ENCODE measurements at regions of chr14 and their contacts with region 1.

Region 1: DNA sequence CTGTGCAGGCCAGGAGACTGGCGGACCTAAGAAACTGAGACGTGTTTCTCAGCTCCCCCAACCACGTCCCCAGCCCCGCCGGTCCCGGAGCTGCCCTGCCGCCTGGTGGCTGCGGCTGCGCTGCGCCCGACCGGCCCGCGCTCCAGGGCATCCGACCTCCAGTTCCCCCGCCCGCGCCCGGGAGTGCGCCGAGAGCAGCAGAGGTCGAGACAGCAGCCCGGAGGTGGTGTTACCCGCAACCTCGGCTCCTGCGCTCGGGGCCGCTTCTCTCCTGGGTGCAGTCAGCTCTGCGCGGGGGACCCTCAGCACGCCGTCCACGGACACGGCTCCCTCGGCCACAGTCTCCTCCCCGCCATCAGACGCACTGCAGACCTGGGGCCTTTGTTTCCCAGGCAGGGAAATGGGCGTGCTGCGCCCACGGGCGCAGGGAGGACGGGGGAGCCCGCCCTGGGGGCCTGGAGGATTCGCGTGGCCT is 21.6 kb upstream of the GPR132 start:
- DNase-seq: peak; percentile 74 to 85 (median 77)
- ATAC-seq: peak; percentile 95
- H3K4me3 ChIP-seq: peak overlapping the region; percentile 33
- H3K27ac ChIP-seq: no peak overlapping the region
- H3K4me1 ChIP-seq: peaks cover 3 to 50% of the 10 kb centered on the region in 2 experiments; a peak in 2 of 5 replicates
- H3K27me3 ChIP-seq: no peaks in the 10 kb centered on the region; a peak in 1 of 5 replicates
- CTCF ChIP-seq: peak; percentile 74 to 91 (median 83)
- EP300 ChIP-seq: no peak
- POLR2A ChIP-seq: 0 out of 2 replicates have a peak, but pooled peaks have one; percentile 34
- RAD21 ChIP-seq: peak; percentile 74 to 82

Region 2: GRCh38 chr14:104805326-104805678 is 281.6 kb before region 1 on chr14:
- CTCF ChIA-PET with region 1: no interaction called
- POLR2A ChIA-PET with region 1: no interaction called
- in situ Hi-C with region 1: no loop called
- intact Hi-C with region 1: no loop called
- DNase-seq: peak; percentile 82 to 91 (median 88)
- ATAC-seq: peak; percentile 86
- H3K4me3 ChIP-seq: no peak overlapping the region
- H3K27ac ChIP-seq: peak overlapping the region; percentile 73
- H3K4me1 ChIP-seq: peaks cover 33 to 67% of the 10 kb centered on the region in 2 experiments
- H3K27me3 ChIP-seq: no peaks in the 10 kb centered on the region
- CTCF ChIP-seq: no peak
- EP300 ChIP-seq: no peak
- POLR2A ChIP-seq: no peak
- RAD21 ChIP-seq: no peak

Region 3: DNA sequence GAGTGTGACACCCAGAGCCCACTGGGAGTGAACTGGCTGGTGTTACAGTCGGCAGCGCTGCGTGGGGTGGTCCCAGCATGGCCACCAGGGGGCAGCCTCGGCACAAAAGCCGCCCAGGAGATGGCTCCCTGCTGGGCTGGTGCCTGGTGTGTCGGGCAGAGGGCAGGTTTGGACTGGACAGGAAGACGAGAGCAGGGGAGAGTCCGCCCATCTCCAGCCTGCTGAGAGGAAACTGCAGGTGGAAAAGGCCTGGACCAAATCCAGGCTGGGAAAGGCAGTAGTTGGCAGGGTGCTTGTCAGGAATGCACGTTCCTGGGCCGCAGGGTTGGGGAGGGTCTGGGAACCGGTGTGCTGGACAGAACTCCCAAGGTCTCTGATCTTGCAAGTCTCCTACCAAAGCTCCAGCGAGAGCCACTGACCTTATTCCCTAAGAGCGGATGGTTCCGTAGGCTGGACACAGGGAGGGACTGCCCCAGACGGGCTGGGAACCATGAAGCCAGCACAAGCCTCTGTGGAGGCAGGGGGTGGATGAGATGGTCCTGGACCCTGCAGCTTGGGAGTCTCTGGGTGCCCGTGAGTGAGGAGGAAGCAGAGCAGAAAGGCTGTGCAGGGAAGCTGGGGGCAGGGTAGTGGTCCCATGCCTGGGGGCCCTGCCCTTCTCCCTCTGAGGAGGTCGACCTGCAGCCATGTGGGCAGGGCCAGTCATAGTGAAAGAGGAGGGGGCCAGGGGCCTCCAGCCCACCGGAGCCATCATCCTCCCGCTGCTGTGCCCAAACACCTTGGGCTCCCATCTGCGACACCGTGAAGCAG is 110.5 kb before region 1 on chr14:
- CTCF ChIA-PET with region 1: interaction called, 7 read pairs
- POLR2A ChIA-PET with region 1: interaction called, 3 read pairs
- in situ Hi-C with region 1: no loop called
- intact Hi-C with region 1: loop called (anchors 2 kb)
- DNase-seq: peak; percentile 62 to 83 (median 68)
- ATAC-seq: peak; percentile 87
- H3K4me3 ChIP-seq: no peak overlapping the region
- H3K27ac ChIP-seq: no peak overlapping the region
- H3K4me1 ChIP-seq: peaks cover 7 to 80% of the 10 kb centered on the region in 2 experiments; a peak in 4 of 5 replicates
- H3K27me3 ChIP-seq: no peaks in the 10 kb centered on the region
- CTCF ChIP-seq: peak; percentile 78 to 98 (median 93)
- EP300 ChIP-seq: no peak
- POLR2A ChIP-seq: no peak
- RAD21 ChIP-seq: peak; percentile 89 to 97

Region 4: GRCh38 chr14:105045710-105046326 is 41.1 kb before region 1 on chr14:
- CTCF ChIA-PET with region 1: interaction called, 5 read pairs
- POLR2A ChIA-PET with region 1: no interaction called
- in situ Hi-C with region 1: loop called (anchors 5 kb)
- intact Hi-C with region 1: loop called (anchors 5 kb)
- DNase-seq: peak; percentile 87 to 90 (median 88)
- ATAC-seq: peak; percentile 98
- H3K4me3 ChIP-seq: no peak overlapping the region
- H3K27ac ChIP-seq: no peak overlapping the region
- H3K4me1 ChIP-seq: peaks cover 0 to 30% of the 10 kb centered on the region in 2 experiments; a peak in 2 of 5 replicates
- H3K27me3 ChIP-seq: peaks cover 0 to 8% of the 10 kb centered on the region in 2 experiments; a peak in 4 of 5 replicates
- CTCF ChIP-seq: peak; percentile 98 to 100 (median 100)
- EP300 ChIP-seq: no peak
- POLR2A ChIP-seq: no peak
- RAD21 ChIP-seq: peak; percentile 99

Region 5: DNA sequence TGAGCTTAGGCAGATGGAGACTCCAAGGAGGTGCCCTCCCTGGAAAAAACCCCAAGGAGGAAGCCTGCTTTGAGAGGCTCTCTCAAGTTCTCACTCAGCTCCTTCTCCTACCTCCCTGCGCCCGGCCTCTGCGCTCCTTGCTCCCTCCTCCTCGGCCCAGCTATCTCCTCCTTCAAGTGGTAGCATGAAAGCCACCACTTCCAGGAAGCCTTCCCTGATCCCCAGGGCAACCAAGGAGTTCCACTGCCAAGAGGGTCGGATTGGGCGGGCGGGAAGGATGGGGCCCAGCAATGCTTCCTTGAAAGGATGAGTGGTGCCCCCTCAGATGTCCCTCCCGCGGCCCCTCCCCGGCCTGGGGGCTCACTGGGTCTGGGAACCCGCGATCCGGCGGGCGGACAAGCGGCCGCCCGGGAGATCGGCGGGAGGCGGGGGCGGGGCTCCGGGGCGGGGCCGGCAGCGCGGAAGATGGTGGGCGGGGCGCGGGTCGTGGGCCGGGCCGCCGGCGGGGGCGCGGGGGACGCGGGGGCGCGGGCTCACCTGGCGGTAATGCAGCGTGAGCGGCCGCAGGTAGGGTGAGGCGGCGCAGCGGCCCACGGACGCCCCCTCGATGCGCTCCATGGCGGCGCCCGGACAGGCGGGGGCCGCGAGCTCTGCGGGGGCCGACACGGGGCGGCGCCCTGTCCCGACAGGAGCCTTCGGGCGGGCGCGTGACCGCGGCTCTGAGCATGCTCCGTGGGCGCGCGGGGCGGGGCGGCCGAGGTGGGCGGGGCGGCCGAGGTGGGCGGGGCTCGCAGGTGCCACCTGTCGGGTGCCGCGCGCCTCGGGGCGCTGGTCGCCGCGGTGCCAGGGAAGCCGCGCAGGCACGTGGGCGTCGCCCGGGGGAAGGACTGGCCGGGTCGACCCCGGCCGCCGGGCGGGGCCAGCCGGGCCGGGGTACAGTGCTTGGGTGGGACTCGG is 94.0 kb after region 1 on chr14 and contains the start of gene NUDT14:
- CTCF ChIA-PET with region 1: no interaction called
- POLR2A ChIA-PET with region 1: no interaction called
- in situ Hi-C with region 1: no loop called
- intact Hi-C with region 1: loop called (anchors 5 kb)
- DNase-seq: peak; percentile 73 to 91 (median 84)
- ATAC-seq: peak; percentile 85
- H3K4me3 ChIP-seq: peak within 1 kb of the TSS; percentile 47
- H3K27ac ChIP-seq: no peak within 1 kb of the TSS; the same call in 2 of the 3 replicates
- H3K4me1 ChIP-seq: peaks cover 3 to 78% of the 10 kb centered on the region in 2 experiments; a peak in 4 of 5 replicates
- H3K27me3 ChIP-seq: no peaks in the 10 kb centered on the region
- CTCF ChIP-seq: no peak
- EP300 ChIP-seq: no peak
- POLR2A ChIP-seq: no peak
- RAD21 ChIP-seq: no peak
- polyA plus RNA-seq, gene NUDT14: 0.14 to 0.85 TPM

Region 6: DNA sequence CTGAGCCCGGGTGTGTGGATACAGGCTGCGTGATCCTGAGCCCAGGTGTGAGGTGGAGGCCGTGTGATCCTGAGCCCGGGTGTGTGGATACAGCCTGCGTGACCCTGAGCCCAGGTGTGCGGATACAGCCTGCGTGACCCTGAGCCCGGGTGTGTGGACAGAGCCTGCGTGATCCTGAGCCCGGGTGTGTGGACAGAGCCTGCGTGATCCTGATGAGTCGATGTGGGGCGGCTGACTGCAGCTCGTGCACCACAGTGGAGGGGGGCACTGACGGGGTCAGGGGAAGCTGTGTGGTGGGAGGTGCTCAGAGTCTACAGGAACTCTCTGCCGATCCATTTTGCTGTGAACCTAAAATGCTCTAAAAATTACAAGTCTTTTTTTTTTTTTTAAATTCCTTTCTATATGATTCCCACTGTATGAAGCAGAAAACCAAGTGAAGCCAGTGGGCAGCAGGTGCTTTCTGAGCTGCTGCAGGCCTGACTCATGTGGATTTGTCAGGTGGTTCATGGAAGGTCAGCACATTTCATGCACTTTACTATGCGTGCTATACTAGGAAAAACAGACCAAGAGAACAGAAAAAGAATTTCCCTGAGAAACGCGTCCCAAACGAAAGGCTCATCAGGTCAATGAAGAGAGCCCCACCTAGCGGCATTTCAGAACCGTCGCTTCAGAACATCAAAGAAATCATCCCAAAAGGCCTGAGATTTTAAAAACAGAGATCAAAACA is 194.7 kb after region 1 on chr14:
- CTCF ChIA-PET with region 1: no interaction called
- POLR2A ChIA-PET with region 1: no interaction called
- in situ Hi-C with region 1: loop called (anchors 10 kb)
- intact Hi-C with region 1: loop called (anchors 1 kb)
- DNase-seq: peak in 3 of 4 experiments; percentile 24 to 52 (median 44)
- ATAC-seq: peak; percentile 64
- H3K4me3 ChIP-seq: no peak overlapping the region
- H3K27ac ChIP-seq: no peak overlapping the region
- H3K4me1 ChIP-seq: peaks cover 0 to 9% of the 10 kb centered on the region in 2 experiments; a peak in 2 of 5 replicates
- H3K27me3 ChIP-seq: no peaks in the 10 kb centered on the region
- CTCF ChIP-seq: peak; percentile 47 to 65 (median 65)
- EP300 ChIP-seq: no peak
- POLR2A ChIP-seq: no peak
- RAD21 ChIP-seq: peak in 1 of 2 experiments; percentile 38; a peak in 1 of 4 replicates

Region 7: DNA sequence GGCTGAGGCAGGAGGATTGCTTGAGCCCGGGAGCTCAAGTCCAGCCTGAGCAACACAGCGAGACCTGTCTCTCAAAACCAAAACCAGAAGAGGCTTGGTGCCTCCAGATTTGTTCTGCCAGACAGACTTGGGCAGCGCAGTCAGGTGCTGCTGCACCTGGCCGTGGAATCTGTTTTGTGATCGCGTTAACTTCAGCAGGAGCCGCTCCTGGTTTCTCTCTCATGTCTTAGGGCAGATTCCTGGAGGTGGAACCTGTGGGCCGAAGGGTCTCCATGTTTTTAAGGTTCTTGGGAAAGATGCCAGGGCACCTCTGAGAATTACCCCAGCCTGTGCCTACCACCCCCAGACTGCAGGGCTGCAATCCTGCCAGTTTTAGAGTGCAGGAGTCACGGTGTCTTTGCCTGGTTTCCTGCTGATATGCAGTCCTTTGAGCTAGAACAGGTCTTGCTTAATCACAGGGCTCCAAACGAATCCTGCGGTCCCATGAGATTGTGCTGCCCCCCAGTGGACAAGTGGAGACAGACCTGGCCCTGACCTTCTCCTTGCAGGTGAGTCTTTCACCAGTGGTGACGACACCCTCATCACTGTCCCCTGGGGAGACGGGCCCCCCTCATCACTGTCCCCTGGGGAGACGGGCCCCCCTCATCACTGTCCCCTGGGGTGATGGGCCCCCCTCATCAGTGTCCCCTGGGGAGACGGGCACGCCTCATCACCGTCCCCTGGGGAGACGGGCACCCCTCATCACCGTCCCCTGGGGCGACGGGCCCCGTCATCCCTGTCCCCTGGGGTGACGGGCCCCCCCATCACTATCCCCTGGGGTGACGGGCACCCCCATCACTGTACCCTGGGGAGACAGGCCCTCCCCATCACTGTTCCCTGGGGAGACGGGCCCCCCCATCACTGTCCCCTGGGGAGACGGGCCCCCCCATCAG is 265.3 kb after region 1 on chr14:
- CTCF ChIA-PET with region 1: interaction called, 3 read pairs
- POLR2A ChIA-PET with region 1: no interaction called
- in situ Hi-C with region 1: loop called (anchors 10 kb)
- intact Hi-C with region 1: no loop called
- DNase-seq: peak; percentile 75 to 86 (median 80)
- ATAC-seq: peak; percentile 99
- H3K4me3 ChIP-seq: no peak overlapping the region
- H3K27ac ChIP-seq: no peak overlapping the region
- H3K4me1 ChIP-seq: peaks cover 3 to 42% of the 10 kb centered on the region in 2 experiments; a peak in 4 of 5 replicates
- H3K27me3 ChIP-seq: no peaks in the 10 kb centered on the region
- CTCF ChIP-seq: peak; percentile 82 to 90 (median 84)
- EP300 ChIP-seq: no peak
- POLR2A ChIP-seq: no peak
- RAD21 ChIP-seq: peak; percentile 69 to 90

Region 8: GRCh38 chr14:105527661-105528581 is 441.1 kb after region 1 on chr14:
- CTCF ChIA-PET with region 1: no interaction called
- POLR2A ChIA-PET with region 1: no interaction called
- in situ Hi-C with region 1: no loop called
- intact Hi-C with region 1: loop called (anchors 5 kb)
- DNase-seq: peak; percentile 79 to 87 (median 80)
- ATAC-seq: peak; percentile 91
- H3K4me3 ChIP-seq: peak overlapping the region; percentile 31
- H3K27ac ChIP-seq: no peak overlapping the region
- H3K4me1 ChIP-seq: peaks cover 0 to 53% of the 10 kb centered on the region in 2 experiments; a peak in 2 of 5 replicates
- H3K27me3 ChIP-seq: peaks cover 2 to 23% of the 10 kb centered on the region in 2 experiments; a peak in 2 of 5 replicates
- CTCF ChIP-seq: peak; percentile 62 to 92 (median 78)
- EP300 ChIP-seq: no peak
- POLR2A ChIP-seq: no peak
- RAD21 ChIP-seq: peak; percentile 69 to 80

Region 9: GRCh38 chr14:105861985-105862465 is 775.2 kb after region 1 on chr14:
- CTCF ChIA-PET with region 1: no interaction called
- POLR2A ChIA-PET with region 1: no interaction called
- in situ Hi-C with region 1: no loop called
- intact Hi-C with region 1: no loop called
- DNase-seq: no peak
- ATAC-seq: no peak
- H3K4me3 ChIP-seq: no peak overlapping the region
- H3K27ac ChIP-seq: no peak overlapping the region
- H3K4me1 ChIP-seq: no peaks in the 10 kb centered on the region
- H3K27me3 ChIP-seq: peaks cover 3 to 12% of the 10 kb centered on the region in 2 experiments; a peak in 3 of 5 replicates
- CTCF ChIP-seq: no peak
- EP300 ChIP-seq: no peak
- POLR2A ChIP-seq: no peak
- RAD21 ChIP-seq: no peak